Left cardiac atrium (tissue), 4 donors: ENCODE measurements at regions of chr18 and their contacts with region 1.

Region 1: DNA sequence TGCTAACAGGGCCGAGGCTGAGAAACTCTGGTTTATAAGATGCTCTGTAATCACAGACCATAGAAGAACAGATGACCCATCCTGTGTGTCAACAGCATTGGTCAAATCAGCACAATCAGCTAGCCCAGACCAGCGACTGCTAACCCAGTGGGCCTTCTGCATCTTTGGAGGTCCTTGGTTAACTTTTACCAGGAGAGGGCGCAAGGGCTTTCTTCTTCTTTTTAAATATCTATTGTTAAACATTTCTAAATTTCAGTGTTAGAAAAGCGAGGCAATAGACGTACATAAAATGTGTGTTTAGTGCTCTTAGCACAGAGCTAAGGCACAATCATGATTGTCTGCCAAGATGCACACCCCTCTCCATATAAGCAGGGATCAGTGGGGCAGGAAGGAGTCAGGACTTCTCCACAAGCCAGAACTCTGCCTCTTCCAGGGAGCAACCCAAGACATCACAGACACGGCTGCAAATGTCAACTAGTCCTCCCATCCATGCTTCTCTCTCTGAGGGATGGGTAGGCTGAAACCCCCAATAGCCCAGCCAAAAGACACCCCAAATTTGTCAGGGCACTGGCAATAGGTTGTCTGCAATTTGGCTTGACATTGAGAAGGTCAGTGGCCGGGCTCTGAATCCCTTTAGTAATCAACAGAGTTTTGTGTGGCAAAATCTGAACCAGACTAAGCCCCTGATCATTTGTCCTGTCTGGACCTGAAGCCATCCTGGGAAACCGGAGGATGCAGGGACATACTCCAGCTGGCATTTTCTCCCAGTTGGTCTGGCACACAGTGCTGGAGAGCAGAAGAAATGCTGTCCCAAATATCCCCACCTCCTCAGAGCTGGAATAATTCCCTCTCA is 188.2 kb downstream of the BCL2 start:
- DNase-seq: peak; percentile 48
- ATAC-seq: peak; percentile 50 to 54

Region 2: DNA sequence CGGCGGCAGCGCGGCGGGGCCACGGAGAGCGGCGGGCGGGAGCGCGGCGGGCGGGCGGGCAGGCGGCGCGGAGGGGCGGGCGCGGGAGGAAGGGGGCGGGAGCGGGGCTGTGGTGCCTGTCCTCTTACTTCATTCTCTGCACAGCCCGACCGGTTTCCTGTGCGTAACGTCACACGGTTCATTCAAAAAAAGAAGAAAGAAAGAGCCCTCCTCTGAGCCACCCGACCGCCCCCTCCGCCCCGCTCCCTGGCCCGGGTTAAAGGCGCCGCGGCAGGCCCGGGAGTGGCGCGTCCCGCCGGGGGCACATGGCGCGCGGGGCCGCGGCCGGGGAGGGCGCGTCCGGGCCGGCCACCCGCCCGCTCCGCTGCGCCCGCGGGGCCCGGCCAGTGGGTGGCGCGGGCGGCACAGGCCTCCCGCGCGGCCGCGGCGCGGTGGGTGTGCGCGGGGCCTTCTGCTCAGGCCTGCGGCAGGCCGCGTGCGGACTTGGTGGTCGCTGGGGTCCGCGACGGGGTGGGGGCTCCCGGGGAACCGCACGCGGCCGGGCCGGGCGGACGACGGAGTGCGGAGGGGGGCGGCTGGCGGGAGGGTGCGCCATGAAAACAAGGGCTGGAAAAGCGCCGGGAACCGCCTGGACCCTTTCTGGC is 188.8 kb after region 1 on chr18:
- intact Hi-C with region 1: loop called (anchors 5 kb)
- DNase-seq: peak; percentile 84
- ATAC-seq: peak; percentile 74 to 80

Region 3: DNA sequence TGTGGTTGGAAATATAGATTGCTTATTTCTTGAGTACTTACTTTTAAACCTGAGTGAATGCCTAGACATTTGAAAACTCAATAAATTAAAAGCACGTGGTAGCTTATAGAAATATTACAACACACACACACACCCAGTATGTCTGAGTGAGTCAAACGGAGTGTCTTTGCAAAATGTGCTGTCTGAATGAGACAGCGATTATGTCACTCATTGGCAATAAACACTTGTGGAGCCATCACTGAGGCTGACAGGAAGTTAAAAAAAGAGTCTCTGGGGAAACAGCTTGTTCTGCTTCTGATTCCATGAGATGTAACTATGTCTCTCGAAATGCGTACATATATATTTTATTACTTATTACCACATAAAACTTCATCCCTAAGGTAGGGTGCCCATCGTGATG is 313.2 kb after region 1 on chr18:
- intact Hi-C with region 1: loop called in 1 of 2 experiments (anchors 10 kb)
- DNase-seq: no peak
- ATAC-seq: peak; percentile 58 to 78